PC-3 (cell line): ENCODE measurements at regions of chr16 and their contacts with region 1.

Region 1: DNA sequence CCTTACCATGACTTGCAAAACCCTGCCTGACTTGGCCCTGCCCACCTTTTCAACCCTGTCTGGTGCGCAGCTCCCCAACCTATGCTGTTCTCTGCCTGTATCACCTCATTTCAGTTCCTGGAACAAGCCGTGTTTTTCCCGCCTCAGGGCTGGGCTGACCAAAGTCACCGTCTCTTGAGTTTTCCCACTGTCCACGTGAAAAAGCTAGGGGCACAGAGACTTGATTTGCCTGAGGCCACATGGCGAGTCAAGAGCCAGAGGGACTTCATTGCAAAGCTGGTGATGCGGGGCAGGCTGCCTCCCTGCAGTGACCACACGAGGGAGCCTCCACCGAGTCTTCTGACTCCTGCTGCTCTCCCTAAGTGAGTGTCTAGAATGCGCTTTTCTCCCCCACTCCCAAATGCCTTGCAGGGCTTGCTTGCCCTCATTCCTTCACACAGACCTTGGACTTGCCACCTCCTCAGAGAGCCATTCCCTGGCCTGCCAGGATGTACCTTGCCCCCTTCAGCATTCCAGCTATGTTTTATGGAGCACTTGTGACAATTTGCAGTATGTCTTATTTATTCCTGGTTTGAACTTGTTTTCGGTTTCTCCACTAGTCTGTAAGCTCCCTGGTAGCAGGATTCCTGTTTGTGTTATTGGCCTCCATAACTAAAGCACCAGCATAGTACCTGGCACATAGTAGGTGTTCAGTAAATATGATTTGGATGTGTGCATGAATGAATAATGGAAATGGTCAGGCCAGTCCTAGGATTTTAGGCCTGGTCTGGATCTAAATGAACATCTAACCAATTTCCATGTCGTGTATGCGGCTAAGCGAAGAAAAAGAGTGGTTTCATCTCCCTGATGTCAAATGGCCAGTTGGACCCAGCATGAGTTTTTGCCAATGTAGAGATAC is 252.3 kb downstream of the SNX29 start:
- DNase-seq: peak; percentile 61
- ATAC-seq: peak; percentile 56
- H3K4me3 ChIP-seq: peak overlapping the region; percentile 34; the same call in 1 of the 2 replicates
- H3K27ac ChIP-seq: peak overlapping the region; percentile 82
- H3K4me1 ChIP-seq: peaks cover 46% of the 10 kb centered on the region
- H3K27me3 ChIP-seq: no peaks in the 10 kb centered on the region
- CTCF ChIP-seq: peak; percentile 76

Region 2: DNA sequence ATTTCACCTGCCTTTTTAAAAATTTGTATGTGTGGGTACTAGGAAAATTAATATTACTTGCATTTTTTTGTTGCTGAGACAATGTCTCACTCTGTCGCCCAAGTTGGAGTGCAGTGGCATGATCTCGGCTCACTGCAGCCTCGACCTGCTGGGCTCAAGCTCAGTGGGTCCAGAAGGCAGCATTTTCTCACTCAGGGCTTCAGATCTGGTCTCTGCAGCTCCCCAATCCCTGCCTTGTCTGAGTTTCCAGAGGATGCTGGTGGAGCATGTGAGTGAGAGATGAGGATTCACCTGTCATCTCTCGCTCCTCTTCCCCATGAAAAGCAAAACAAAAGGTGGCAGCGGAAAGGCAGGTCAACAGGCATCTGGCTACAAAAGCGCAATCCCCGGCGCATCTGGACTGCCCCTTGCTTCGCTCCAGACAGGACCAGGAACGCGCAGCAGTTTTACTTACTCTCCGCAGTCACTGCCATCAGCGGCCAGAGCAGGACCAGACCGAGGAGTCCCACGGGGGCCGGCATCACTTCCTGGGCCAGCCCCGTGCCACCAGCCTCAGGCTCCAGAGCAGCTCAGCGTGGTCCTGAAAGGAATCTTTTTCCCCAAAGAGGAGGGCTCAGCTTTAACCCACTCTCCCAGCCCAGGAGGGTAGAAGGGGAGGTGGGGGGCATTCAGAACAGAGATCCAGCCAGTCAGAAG is 702.0 kb before region 1 on chr16:
- CTCF ChIA-PET with region 1: no interaction called
- POLR2A ChIA-PET with region 1: no interaction called
- intact Hi-C with region 1: no loop called
- DNase-seq: no peak
- ATAC-seq: no peak
- H3K4me3 ChIP-seq: no peak overlapping the region
- H3K27ac ChIP-seq: no peak overlapping the region
- H3K4me1 ChIP-seq: no peaks in the 10 kb centered on the region
- H3K27me3 ChIP-seq: no peaks in the 10 kb centered on the region
- CTCF ChIP-seq: no peak

Region 3: DNA sequence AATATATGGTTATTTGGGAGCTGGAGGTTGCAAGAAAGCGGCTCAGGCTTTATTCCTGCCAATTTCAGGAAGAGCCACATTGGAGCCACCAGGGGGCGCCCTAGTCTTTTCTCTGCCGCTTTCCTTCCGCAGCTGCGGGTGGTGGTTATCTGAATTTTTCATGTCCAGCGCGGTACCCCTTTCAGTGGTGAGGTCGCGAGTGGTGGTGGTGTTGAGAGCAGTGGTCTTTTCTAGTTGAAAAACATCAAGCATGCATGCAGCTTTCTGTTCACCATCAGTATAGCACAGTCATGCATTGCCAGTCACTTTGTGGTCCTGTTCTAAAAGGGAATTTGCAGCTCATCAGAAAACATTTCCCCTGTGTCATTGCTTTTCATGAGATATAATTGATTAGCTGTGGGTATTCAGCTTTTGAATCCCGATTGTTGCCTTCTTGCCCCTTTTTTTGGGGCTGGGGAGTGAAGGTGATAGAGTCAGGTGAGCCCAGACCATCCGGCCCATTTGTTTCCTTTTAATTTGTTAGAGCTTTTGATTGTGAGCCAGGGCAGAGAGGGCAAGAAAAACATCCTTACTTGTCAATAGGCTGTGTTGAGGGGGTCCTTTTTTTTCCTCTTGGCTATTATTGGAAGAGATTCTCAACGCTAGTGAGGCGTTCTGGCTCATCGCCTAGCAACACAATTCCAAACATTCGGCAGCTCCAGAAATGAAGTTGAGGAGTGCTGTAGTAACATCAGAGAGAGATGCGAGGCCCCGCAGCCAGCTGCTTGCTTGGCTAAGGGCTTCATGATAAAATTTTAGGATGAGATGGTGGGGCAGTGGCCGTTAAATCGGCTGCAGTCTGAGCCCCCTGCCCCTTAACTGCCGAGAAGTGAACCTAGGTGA is 133.3 kb before region 1 on chr16:
- CTCF ChIA-PET with region 1: interaction called, 7 read pairs
- POLR2A ChIA-PET with region 1: no interaction called
- intact Hi-C with region 1: loop called (anchors 5 kb)
- DNase-seq: peak; percentile 58
- ATAC-seq: no peak
- H3K4me3 ChIP-seq: no peak overlapping the region
- H3K27ac ChIP-seq: no peak overlapping the region
- H3K4me1 ChIP-seq: peaks cover 29% of the 10 kb centered on the region
- H3K27me3 ChIP-seq: no peaks in the 10 kb centered on the region
- CTCF ChIP-seq: peak; percentile 90

Region 4: GRCh38 chr16:12211870-12212690 is 16.8 kb before region 1 on chr16:
- CTCF ChIA-PET with region 1: no interaction called
- POLR2A ChIA-PET with region 1: no interaction called
- intact Hi-C with region 1: loop called (anchors 2 kb)
- DNase-seq: no peak
- ATAC-seq: no peak
- H3K4me3 ChIP-seq: no peak overlapping the region
- H3K27ac ChIP-seq: peak overlapping the region; percentile 61
- H3K4me1 ChIP-seq: peaks cover 6% of the 10 kb centered on the region
- H3K27me3 ChIP-seq: no peaks in the 10 kb centered on the region
- CTCF ChIP-seq: no peak

Region 5: GRCh38 chr16:12340151-12340733 is 111.4 kb after region 1 on chr16:
- CTCF ChIA-PET with region 1: interaction called, 13 read pairs
- POLR2A ChIA-PET with region 1: no interaction called
- intact Hi-C with region 1: loop called (anchors 1 kb)
- DNase-seq: peak; percentile 60
- ATAC-seq: 0 out of 2 replicates have a peak, but pooled peaks have one; percentile 4
- H3K4me3 ChIP-seq: no peak overlapping the region
- H3K27ac ChIP-seq: peak overlapping the region; percentile 97
- H3K4me1 ChIP-seq: peaks cover 32% of the 10 kb centered on the region
- H3K27me3 ChIP-seq: no peaks in the 10 kb centered on the region
- CTCF ChIP-seq: peak; percentile 75

Region 6: GRCh38 chr16:12406926-12407690 is 178.3 kb after region 1 on chr16:
- CTCF ChIA-PET with region 1: no interaction called
- POLR2A ChIA-PET with region 1: no interaction called
- intact Hi-C with region 1: loop called (anchors 2 kb)
- DNase-seq: peak; percentile 63
- ATAC-seq: peak; percentile 98
- H3K4me3 ChIP-seq: no peak overlapping the region
- H3K27ac ChIP-seq: peak overlapping the region; percentile 42
- H3K4me1 ChIP-seq: peaks cover 21% of the 10 kb centered on the region
- H3K27me3 ChIP-seq: no peaks in the 10 kb centered on the region
- CTCF ChIP-seq: no peak

Region 7: GRCh38 chr16:12819126-12820117 is 590.6 kb after region 1 on chr16:
- CTCF ChIA-PET with region 1: no interaction called
- POLR2A ChIA-PET with region 1: no interaction called
- intact Hi-C with region 1: loop called (anchors 10 kb)
- DNase-seq: peak; percentile 63
- ATAC-seq: peak; percentile 45; the same call in 1 of the 2 replicates
- H3K4me3 ChIP-seq: no peak overlapping the region
- H3K27ac ChIP-seq: no peak overlapping the region
- H3K4me1 ChIP-seq: no peaks in the 10 kb centered on the region
- H3K27me3 ChIP-seq: no peaks in the 10 kb centered on the region
- CTCF ChIP-seq: peak; percentile 69